Transverse colon (tissue), 4 donors: ENCODE measurements at regions of chr13 and their contacts with region 1.

Region 1: DNA sequence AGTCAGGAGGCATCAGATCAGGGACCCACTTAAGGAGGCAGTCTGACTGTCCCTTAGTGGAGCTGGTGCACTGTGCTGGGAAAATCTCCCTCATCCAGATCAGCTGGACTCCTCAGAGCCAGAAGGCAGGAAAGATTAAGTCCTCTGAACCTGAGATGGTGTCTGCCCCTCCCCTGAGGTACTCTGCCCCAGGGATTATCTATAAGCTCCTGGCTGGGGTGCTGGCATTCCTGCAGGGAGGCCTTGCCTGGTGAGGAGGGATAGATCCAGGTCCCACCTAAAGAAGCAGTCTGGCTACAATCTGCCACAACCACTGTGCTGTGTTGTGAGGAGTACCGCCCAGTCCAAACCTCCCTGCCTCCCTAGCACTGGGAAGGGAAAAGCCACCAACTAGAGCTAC is 81.2 kb downstream of the NHLRC3 start:
- DNase-seq: no peak
- H3K4me3 ChIP-seq: no peak overlapping the region
- H3K27ac ChIP-seq: no peak overlapping the region
- H3K4me1 ChIP-seq: no peaks in the 10 kb centered on the region
- H3K27me3 ChIP-seq: no peaks in the 10 kb centered on the region
- CTCF ChIP-seq: no peak
- EP300 ChIP-seq: no peak
- POLR2A ChIP-seq: no peak

Region 2: DNA sequence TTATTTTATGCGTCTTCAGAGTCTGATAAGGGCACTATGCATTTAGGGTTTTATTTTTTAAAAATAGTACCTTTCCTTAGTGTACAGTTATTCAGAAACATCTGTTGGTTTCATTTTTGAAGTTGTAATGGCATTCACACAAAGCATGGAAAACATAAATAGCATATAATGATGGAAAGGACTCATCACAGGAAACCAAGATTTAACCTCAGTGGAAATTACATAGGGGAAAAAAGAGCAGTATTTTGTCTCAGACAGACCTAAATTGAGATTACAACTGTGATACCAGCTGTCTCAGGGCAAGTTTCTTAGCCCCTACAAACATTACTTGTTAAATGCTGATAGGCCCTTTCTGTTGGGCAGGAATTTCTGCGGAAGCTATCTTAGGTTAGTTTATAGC is 23.9 kb before region 1 on chr13:
- in situ Hi-C with region 1: no loop called
- intact Hi-C with region 1: loop called (anchors 1 kb)
- DNase-seq: no peak
- H3K4me3 ChIP-seq: no peak overlapping the region
- H3K27ac ChIP-seq: no peak overlapping the region
- H3K4me1 ChIP-seq: no peaks in the 10 kb centered on the region
- H3K27me3 ChIP-seq: no peaks in the 10 kb centered on the region
- CTCF ChIP-seq: no peak
- EP300 ChIP-seq: no peak
- POLR2A ChIP-seq: no peak

Region 3: DNA sequence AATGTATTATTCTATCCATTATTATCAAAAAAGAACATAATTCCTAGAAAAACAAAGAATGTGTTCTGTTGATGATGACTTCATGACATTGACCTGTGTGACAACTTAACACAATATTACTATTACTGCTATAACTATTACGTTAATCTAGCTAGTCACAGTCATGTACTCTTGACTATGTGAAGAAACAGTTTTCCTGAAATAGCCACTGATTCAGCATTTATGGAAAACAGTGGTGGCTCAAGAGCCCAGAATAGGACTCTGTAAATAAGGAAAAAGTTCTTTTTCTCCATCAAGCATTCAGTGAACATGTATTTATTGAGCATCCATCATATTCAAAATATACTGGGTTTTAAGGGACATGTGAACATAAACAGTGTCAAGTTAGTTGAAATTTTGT is 629.5 kb after region 1 on chr13:
- in situ Hi-C with region 1: no loop called
- intact Hi-C with region 1: no loop called
- DNase-seq: no peak
- H3K4me3 ChIP-seq: no peak overlapping the region
- H3K27ac ChIP-seq: no peak overlapping the region
- H3K4me1 ChIP-seq: no peaks in the 10 kb centered on the region
- H3K27me3 ChIP-seq: no peaks in the 10 kb centered on the region
- CTCF ChIP-seq: no peak
- EP300 ChIP-seq: no peak
- POLR2A ChIP-seq: no peak

Region 4: GRCh38 chr13:39935155-39935554 is 815.7 kb after region 1 on chr13:
- in situ Hi-C with region 1: no loop called
- intact Hi-C with region 1: no loop called
- DNase-seq: no peak
- H3K4me3 ChIP-seq: no peak overlapping the region
- H3K27ac ChIP-seq: no peak overlapping the region
- H3K4me1 ChIP-seq: no peaks in the 10 kb centered on the region
- H3K27me3 ChIP-seq: no peaks in the 10 kb centered on the region
- CTCF ChIP-seq: no peak
- EP300 ChIP-seq: no peak
- POLR2A ChIP-seq: no peak